ENCODE measurements at regions of chr1 and their contacts with region 1.

Region 1: DNA sequence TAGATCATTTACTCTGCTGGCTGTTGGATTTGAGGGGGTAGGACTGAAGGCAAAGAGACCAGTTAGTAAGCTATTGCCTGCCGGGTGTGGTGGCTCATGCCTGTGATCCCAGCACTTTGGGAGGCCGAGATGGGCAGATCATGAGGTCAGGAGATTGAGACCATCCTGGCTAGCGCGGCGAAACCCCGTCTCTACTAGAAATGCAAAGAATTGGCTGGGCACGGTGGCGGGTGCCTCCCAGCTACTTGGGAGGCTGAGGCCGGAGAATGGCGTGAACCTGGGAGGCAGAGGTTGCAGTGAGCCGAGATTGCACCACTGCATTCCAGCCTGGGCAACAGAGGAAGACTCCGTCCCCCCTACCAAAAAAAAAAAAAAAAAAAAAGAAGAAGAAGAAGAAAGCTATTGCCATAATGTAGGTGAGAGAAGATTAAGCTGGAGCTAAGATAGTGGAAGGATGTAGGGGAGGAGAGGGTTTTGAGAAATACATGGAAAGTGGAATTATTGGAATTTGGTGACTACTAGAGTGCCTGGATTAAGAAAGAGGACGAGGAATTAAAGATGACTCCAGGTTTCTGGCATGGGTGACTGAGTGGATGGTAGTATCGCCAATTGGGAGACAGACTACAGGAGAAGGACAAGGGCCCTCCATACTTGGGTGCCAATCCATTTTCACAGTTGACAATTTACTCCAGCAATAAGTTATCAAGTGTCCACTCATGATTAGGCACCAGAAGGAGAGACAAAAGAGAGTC is 2.7 kb upstream of the NR1I3 start:
- DNase-seq: no peak
- H3K4me3 ChIP-seq: no peak overlapping the region
- H3K27ac ChIP-seq: no peak overlapping the region
- H3K4me1 ChIP-seq: no peaks in the 10 kb centered on the region
- H3K27me3 ChIP-seq: no peaks in the 10 kb centered on the region
- CTCF ChIP-seq: no peak
- POLR2A ChIP-seq: no peak

Region 2: GRCh38 chr1:161260376-161261260 is 19.9 kb after region 1 on chr1:
- intact Hi-C with region 1: loop called (anchors 1 kb)
- DNase-seq: no peak
- H3K4me3 ChIP-seq: no peak overlapping the region
- H3K27ac ChIP-seq: no peak overlapping the region
- H3K4me1 ChIP-seq: peaks cover 22% of the 10 kb centered on the region
- H3K27me3 ChIP-seq: no peaks in the 10 kb centered on the region
- CTCF ChIP-seq: no peak
- POLR2A ChIP-seq: no peak

Measured in vagina (tissue), 2 donors.